ENCODE measurements at regions of chr10 and their contacts with region 1.

Region 1: GRCh38 chr10:123154092-123154921 is at the start of gene BUB3:
- DNase-seq: peak; percentile 99
- H3K4me3 Mint-ChIP-seq: peak within 1 kb of the TSS; percentile 95
- H3K27ac Mint-ChIP-seq: peak within 1 kb of the TSS; percentile 92
- H3K4me1 Mint-ChIP-seq: peaks cover 32% of the 10 kb centered on the region
- H3K27me3 Mint-ChIP-seq: peaks cover 1% of the 10 kb centered on the region
- CTCF ChIP-seq: no peak
- total RNA-seq, gene BUB3: 185 and 197 TPM in 2 replicates

Region 2: DNA sequence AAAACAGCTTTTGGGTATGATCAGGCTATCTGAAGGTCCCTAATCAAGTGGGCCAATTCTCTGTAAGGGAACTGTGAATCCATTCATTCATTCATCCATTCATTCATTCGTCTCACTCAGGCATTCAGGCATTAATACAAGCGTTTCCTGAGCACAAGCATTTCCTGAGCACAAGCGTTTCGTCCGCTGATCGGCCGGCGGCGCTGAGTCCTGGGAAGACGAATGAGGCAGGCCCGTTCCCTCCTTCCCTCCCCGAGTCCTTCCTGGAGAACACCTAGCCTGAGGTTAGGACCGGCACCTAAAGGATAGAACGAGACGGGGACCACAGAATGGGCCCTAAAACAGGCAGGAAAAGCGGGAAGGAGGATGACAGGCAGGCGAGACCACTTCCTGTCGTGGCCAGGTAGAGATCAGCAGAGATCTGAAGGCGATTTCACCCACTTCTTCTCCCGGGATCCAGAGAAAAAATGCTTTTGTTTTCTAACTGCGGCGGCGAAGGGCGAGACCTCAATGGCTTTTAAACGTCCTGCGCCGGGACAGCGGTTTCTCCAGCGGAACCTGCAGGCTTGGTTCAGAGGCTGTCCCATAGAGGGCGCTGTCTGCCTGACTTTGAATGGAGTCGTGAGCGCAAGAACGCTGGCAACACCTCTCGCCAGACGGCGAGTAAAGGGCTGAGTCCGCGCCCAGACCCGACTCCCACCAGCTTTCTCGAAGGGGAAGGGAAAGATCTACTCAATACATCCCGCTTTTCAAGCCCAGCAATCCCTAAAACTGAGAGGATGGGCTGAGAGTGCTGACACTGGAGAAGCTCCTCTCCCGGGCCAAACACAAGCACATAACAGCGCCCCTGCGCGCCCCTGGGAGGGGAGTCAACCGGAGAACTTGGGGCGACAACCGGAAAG is 21.5 kb before region 1 on chr10:
- CTCF ChIA-PET with region 1: interaction called, 12 read pairs
- POLR2A ChIA-PET with region 1: interaction called, 3 read pairs
- intact Hi-C with region 1: no loop called
- DNase-seq: peak; percentile 84
- H3K4me3 Mint-ChIP-seq: peak overlapping the region; percentile 51
- H3K27ac Mint-ChIP-seq: no peak overlapping the region
- H3K4me1 Mint-ChIP-seq: peaks cover 8% of the 10 kb centered on the region
- H3K27me3 Mint-ChIP-seq: peaks cover 24% of the 10 kb centered on the region
- CTCF ChIP-seq: peak; percentile 87

Region 3: DNA sequence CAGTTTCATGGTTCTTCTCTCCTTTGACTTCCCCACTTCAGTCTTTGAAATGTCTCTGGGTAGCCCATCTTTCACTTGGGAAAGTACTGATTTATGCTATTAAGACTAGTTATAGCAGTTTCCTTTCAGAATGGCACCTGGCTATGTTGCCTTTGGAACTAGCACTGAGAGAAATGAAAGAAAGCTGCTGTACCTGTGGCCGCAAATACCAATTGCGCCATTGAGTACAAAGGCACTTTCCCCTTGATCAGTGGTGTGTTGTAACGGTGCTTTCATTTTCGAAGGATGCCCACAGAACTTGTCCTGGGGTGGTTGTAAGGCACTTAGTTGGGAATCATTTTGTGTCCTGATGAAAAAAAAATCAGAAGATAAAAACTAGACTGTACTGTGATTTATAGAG is 16.7 kb after region 1 on chr10:
- CTCF ChIA-PET with region 1: interaction called, 3 read pairs
- POLR2A ChIA-PET with region 1: interaction called, 12 read pairs
- intact Hi-C with region 1: no loop called
- DNase-seq: no peak
- H3K4me3 Mint-ChIP-seq: no peak overlapping the region
- H3K27ac Mint-ChIP-seq: no peak overlapping the region
- H3K4me1 Mint-ChIP-seq: no peaks in the 10 kb centered on the region
- H3K27me3 Mint-ChIP-seq: no peaks in the 10 kb centered on the region
- CTCF ChIP-seq: no peak

Region 4: DNA sequence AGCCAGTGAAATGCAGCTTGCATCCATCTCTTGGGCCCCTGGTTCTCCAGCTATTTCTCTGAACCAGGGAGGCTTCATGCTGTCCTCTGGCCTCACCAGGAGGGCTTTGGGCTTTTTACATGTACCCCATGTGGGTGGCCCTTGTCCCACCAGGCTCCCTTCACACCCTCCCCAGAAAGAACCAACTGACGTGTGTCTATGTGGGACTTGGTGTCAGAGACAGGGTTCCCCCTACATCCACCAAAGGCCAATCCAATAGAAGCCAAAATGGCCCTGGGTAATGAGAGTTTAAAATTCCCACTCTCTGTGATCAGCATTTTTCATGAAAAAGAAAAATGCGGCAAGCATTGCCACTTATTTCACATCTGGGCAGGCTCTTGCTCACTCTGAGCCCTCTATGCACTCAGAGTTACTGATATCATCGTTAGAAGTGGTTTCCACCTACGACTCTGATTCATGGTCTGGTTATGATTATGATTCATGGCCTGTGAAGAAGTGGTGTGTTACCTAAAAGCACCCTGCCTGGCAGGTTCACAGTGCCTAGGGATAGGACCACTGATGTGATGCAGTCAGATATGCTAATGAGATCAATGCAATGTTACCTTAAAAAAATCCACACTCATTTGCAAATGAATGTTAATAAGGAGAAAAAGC is 133.4 kb after region 1 on chr10:
- CTCF ChIA-PET with region 1: no interaction called
- POLR2A ChIA-PET with region 1: no interaction called
- intact Hi-C with region 1: loop called (anchors 10 kb)
- DNase-seq: peak; percentile 76
- H3K4me3 Mint-ChIP-seq: no peak overlapping the region
- H3K27ac Mint-ChIP-seq: no peak overlapping the region
- H3K4me1 Mint-ChIP-seq: no peaks in the 10 kb centered on the region
- H3K27me3 Mint-ChIP-seq: no peaks in the 10 kb centered on the region
- CTCF ChIP-seq: no peak

Region 5: GRCh38 chr10:123380497-123381085 is 226.3 kb after region 1 on chr10:
- CTCF ChIA-PET with region 1: interaction called, 9 read pairs
- POLR2A ChIA-PET with region 1: interaction called, 6 read pairs
- intact Hi-C with region 1: loop called (anchors 2 kb)
- DNase-seq: peak; percentile 33
- H3K4me3 Mint-ChIP-seq: no peak overlapping the region
- H3K27ac Mint-ChIP-seq: no peak overlapping the region
- H3K4me1 Mint-ChIP-seq: peaks cover 18% of the 10 kb centered on the region
- H3K27me3 Mint-ChIP-seq: no peaks in the 10 kb centered on the region
- CTCF ChIP-seq: peak; percentile 41

Measured in MCF 10A (cell line).